Activated CD8-positive, alpha-beta T cell treated with anti-CD3 and anti-CD28 coated beads for 36 hours (primary cell): ENCODE measurements at regions of chr14 and their contacts with region 1.

Region 1: GRCh38 chr14:77151918-77152588 is 10.5 kb upstream of the ZDHHC22 start:
- DNase-seq: no peak
- ATAC-seq: peak; percentile 67
- H3K4me3 Mint-ChIP-seq: no peak overlapping the region
- H3K27ac Mint-ChIP-seq: no peak overlapping the region
- H3K4me1 Mint-ChIP-seq: no peaks in the 10 kb centered on the region
- H3K27me3 Mint-ChIP-seq: peaks cover 21% of the 10 kb centered on the region
- CTCF ChIP-seq: no peak

Region 2: DNA sequence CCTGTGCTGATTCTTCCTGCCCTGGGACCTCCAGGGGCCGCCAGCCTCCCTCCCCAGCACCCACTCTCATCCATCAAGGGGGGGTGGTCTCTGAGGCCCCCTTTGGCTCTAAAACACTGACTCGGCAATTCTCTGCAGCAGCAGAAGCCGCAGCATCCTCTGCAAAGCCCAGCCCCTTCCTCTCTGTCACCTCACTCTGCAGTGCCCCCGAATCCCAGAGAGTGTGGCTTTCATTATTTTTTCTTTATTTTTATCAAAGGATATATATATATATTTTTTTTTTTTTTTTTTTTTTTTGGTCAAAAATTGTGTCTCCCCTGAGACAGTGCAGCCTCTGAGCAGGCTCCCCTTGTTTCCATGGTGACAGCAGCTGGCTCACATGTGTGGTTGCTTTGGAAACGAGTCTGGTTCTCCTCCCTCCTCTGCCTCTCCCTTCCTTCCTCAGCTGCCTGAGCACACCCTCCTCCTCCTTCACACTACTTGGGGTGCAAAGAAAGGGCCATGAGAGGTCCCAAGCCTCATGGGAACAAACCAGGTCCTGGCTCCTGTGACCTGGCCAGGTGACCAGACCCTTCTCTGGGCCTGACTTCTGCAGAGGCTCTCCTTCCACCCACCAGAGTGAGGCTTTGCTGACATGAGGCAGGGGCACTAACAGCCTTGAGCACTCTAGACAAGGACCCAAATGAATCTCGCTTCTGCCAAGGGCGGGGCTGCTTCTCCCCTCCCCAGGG is 225.4 kb before region 1 on chr14:
- CTCF ChIA-PET with region 1: no interaction called
- POLR2A ChIA-PET with region 1: no interaction called
- intact Hi-C with region 1: no loop called
- DNase-seq: peak; percentile 77
- ATAC-seq: peak; percentile 71
- H3K4me3 Mint-ChIP-seq: no peak overlapping the region
- H3K27ac Mint-ChIP-seq: no peak overlapping the region
- H3K4me1 Mint-ChIP-seq: peaks cover 70% of the 10 kb centered on the region
- H3K27me3 Mint-ChIP-seq: no peaks in the 10 kb centered on the region
- CTCF ChIP-seq: no peak

Region 3: DNA sequence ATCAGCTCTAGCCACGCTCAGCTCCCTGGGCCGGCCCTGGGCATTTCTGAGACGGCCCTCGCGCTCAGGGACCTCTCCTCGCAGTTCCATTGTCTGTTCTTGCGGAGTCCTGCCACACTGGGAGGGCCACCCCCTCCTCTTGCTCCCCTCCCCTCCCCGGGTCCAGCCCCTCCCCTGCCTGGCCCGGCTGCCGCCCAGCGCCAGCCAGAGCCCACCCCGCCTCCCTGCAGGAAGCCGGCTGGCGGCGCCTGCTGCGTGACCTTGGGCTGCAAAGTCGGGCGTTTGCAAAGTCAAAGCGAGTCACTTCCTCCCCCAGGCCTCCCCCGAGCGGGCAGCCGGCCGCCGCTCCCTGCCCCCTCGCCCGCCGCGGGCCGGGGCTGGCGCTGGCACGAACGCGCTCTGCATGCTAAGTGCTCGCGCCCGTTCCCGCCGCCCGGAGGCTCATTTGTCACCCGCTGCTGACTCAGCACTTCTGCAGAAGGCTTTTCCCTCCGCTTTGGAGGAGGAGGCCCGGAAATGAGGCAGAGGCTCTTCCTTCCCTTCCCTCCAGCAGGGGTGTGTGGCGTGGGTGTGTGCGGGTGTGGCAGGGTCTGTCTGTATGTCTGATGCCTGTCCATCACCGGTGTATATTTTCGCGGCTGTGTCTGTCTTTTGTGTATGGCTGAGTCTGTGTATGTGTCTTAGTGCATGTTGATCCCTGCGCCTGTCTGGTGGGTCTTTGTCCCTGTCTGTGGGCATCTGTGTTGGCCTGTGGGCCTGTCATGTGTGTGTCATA is 195.6 kb before region 1 on chr14:
- CTCF ChIA-PET with region 1: no interaction called
- POLR2A ChIA-PET with region 1: no interaction called
- intact Hi-C with region 1: no loop called
- DNase-seq: peak; percentile 96
- ATAC-seq: peak; percentile 64
- H3K4me3 Mint-ChIP-seq: peak overlapping the region; percentile 79
- H3K27ac Mint-ChIP-seq: peak overlapping the region; percentile 94
- H3K4me1 Mint-ChIP-seq: peaks cover 68% of the 10 kb centered on the region
- H3K27me3 Mint-ChIP-seq: no peaks in the 10 kb centered on the region
- CTCF ChIP-seq: no peak

Region 4: GRCh38 chr14:77028384-77029231 is 123.4 kb before region 1 on chr14 and contains the start of gene IRF2BPL:
- CTCF ChIA-PET with region 1: no interaction called
- POLR2A ChIA-PET with region 1: no interaction called
- intact Hi-C with region 1: no loop called
- DNase-seq: peak; percentile 95
- ATAC-seq: peak; percentile 73
- H3K4me3 Mint-ChIP-seq: peak within 1 kb of the TSS; percentile 97
- H3K27ac Mint-ChIP-seq: peak within 1 kb of the TSS; percentile 94
- H3K4me1 Mint-ChIP-seq: peaks cover 51% of the 10 kb centered on the region
- H3K27me3 Mint-ChIP-seq: no peaks in the 10 kb centered on the region
- CTCF ChIP-seq: no peak
- total RNA-seq, gene IRF2BPL: 36.2 to 37.7 TPM

Region 5: GRCh38 chr14:77133720-77134338 is 18.2 kb before region 1 on chr14:
- CTCF ChIA-PET with region 1: interaction called, 32 read pairs
- POLR2A ChIA-PET with region 1: no interaction called
- intact Hi-C with region 1: no loop called
- DNase-seq: peak; percentile 81
- ATAC-seq: peak; percentile 96
- H3K4me3 Mint-ChIP-seq: no peak overlapping the region
- H3K27ac Mint-ChIP-seq: no peak overlapping the region
- H3K4me1 Mint-ChIP-seq: no peaks in the 10 kb centered on the region
- H3K27me3 Mint-ChIP-seq: peaks cover 47% of the 10 kb centered on the region
- CTCF ChIP-seq: no peak

Region 6: GRCh38 chr14:77141214-77142004 is 10.6 kb before region 1 on chr14 and contains the start of gene ZDHHC22:
- CTCF ChIA-PET with region 1: interaction called, 33 read pairs
- POLR2A ChIA-PET with region 1: no interaction called
- intact Hi-C with region 1: no loop called
- DNase-seq: no peak
- ATAC-seq: peak; percentile 23
- H3K4me3 Mint-ChIP-seq: no peak within 1 kb of the TSS
- H3K27ac Mint-ChIP-seq: no peak within 1 kb of the TSS
- H3K4me1 Mint-ChIP-seq: peaks cover 14% of the 10 kb centered on the region
- H3K27me3 Mint-ChIP-seq: peaks cover 67% of the 10 kb centered on the region
- CTCF ChIP-seq: peak; percentile 60
- total RNA-seq, gene ZDHHC22: not detected

Region 7: DNA sequence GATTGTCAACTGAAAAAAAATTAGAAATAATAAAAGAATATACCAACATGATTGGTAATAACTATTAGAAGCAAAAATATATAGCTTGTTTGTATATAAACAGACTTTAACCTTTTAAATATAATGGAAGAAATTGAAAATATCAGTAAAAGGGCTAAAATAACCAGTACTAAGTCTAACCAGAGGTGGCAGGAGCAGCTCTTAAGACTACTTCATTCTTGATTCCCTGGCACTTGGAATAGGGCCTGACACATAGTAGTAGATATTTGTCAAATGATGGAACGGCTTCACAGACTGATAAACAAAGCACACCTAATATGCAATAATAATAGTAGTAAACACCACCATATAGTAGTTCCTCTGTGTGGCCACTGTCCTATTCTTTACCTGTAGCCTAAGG is 38.9 kb after region 1 on chr14:
- CTCF ChIA-PET with region 1: interaction called, 22 read pairs
- POLR2A ChIA-PET with region 1: interaction called, 3 read pairs
- intact Hi-C with region 1: no loop called
- DNase-seq: no peak
- ATAC-seq: no peak
- H3K4me3 Mint-ChIP-seq: no peak overlapping the region
- H3K27ac Mint-ChIP-seq: no peak overlapping the region
- H3K4me1 Mint-ChIP-seq: no peaks in the 10 kb centered on the region
- H3K27me3 Mint-ChIP-seq: peaks cover 13% of the 10 kb centered on the region
- CTCF ChIP-seq: no peak

Region 8: DNA sequence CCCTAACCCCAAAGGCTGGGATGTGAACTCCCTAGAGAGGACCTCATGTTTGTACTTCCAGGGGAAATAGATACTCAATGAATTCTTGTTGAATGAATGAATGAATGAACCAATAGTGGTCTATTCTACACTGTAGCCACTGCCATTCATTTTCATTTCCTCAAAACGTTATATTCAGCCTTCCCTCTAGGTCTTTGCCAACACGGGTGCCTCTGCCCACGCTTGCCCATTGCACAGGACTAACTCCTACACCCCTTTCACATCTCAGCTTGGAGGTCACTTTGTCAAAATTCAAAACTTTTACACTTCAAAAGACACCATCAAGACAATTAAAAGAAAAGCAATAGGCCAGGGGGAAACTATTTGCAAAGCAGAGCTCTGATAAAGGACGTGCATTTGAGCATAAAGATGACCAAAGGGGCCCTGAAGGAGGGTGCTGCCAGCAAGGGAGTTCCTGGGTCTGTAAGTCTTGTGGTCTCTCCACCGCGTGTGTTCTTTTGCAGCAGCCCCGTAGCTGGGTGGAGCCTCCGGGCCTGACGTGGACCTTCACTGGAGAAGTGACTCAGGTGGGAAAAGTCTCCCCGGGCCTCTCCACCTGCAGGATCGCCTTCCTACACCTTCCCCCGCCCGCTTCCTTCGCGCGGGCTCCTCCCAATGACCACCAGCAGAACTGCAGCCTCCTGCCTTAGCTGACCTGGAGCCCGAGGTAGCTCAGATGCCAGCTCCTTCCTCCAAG is 61.1 kb after region 1 on chr14:
- CTCF ChIA-PET with region 1: interaction called, 45 read pairs
- POLR2A ChIA-PET with region 1: interaction called, 3 read pairs
- intact Hi-C with region 1: loop called (anchors 10 kb)
- DNase-seq: peak; percentile 57
- ATAC-seq: peak; percentile 91
- H3K4me3 Mint-ChIP-seq: no peak overlapping the region
- H3K27ac Mint-ChIP-seq: no peak overlapping the region
- H3K4me1 Mint-ChIP-seq: no peaks in the 10 kb centered on the region
- H3K27me3 Mint-ChIP-seq: peaks cover 15% of the 10 kb centered on the region
- CTCF ChIP-seq: peak; percentile 73

Region 9: DNA sequence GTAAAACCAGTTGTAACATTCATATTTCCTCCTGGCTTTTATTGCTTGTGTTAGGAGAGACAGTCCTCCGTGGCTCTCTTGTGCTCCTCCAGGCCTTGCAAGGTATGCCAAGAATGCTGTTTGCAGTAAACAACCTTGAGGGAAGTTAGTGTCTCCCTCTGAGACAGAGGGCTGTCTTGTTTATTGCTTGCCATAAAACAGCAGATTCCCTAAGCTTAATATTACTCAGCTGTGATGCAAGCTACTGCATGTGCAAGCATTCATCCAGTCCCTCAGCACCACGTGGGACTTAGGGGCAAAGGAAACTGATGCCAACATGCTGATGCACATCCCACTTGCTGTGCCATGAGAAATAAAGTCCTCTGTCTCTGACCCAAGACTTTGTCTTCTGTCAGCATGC is 162.0 kb after region 1 on chr14:
- CTCF ChIA-PET with region 1: interaction called, 134 read pairs
- POLR2A ChIA-PET with region 1: interaction called, 3 read pairs
- intact Hi-C with region 1: loop called (anchors 2 kb)
- DNase-seq: no peak
- ATAC-seq: no peak
- H3K4me3 Mint-ChIP-seq: no peak overlapping the region
- H3K27ac Mint-ChIP-seq: no peak overlapping the region
- H3K4me1 Mint-ChIP-seq: peaks cover under 1% of the 10 kb centered on the region
- H3K27me3 Mint-ChIP-seq: no peaks in the 10 kb centered on the region
- CTCF ChIP-seq: no peak

Region 10: GRCh38 chr14:77320238-77320935 is 168.3 kb after region 1 on chr14 and contains the start of gene POMT2:
- CTCF ChIA-PET with region 1: interaction called, 134 read pairs
- POLR2A ChIA-PET with region 1: interaction called, 3 read pairs
- intact Hi-C with region 1: loop called (anchors 2 kb)
- DNase-seq: peak; percentile 94
- ATAC-seq: peak; percentile 52
- H3K4me3 Mint-ChIP-seq: peak within 1 kb of the TSS; percentile 92
- H3K27ac Mint-ChIP-seq: peak within 1 kb of the TSS; percentile 100
- H3K4me1 Mint-ChIP-seq: peaks cover 18% of the 10 kb centered on the region
- H3K27me3 Mint-ChIP-seq: no peaks in the 10 kb centered on the region
- CTCF ChIP-seq: peak; percentile 60
- total RNA-seq, gene POMT2: 14.2 to 15.3 TPM